Pancreas (tissue), 10 donors: ENCODE measurements at regions of chr1 and their contacts with region 1.

Region 1: GRCh38 chr1:223707256-223708000 is 4.9 kb upstream of the CAPN2 start:
- DNase-seq: peak in 4 of 6 donors; percentile 55 to 74 (median 66)
- ATAC-seq: peak; percentile 80 to 90 (median 85)
- H3K4me3 ChIP-seq: no peak overlapping the region
- H3K27ac ChIP-seq: peak overlapping the region; percentile 33 to 84 (median 76)
- H3K4me1 ChIP-seq: peaks cover 0 to 24% (median 7%) of the 10 kb centered on the region in 3 donors
- H3K27me3 ChIP-seq: no peaks in the 10 kb centered on the region
- CTCF ChIP-seq: no peak

Region 2: DNA sequence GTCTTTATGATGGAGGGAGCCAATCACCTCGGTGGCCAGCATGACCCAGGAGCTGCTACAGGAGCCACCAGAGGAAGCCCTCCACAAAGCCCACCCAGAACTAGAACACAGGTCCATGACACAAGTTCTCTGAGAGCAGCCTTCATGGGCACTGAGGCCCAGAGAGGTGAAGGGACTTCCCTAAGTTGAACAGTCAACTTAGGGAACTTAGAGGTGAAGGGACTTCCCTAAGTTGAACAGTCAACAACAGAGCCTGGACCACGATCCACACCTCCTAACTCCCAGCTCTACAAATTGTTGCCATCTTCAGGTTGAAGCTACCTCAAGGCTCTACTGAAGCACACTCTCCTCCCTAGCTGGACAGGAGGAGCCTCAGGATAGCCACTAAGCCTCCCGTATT is 181.5 kb before region 1 on chr1:
- intact Hi-C with region 1: no loop called
- DNase-seq: no peak
- ATAC-seq: no peak
- H3K4me3 ChIP-seq: no peak overlapping the region
- H3K27ac ChIP-seq: no peak overlapping the region
- H3K4me1 ChIP-seq: no peaks in the 10 kb centered on the region
- H3K27me3 ChIP-seq: no peaks in the 10 kb centered on the region
- CTCF ChIP-seq: no peak

Region 3: GRCh38 chr1:223748773-223749733 is 41.6 kb after region 1 on chr1:
- intact Hi-C with region 1: loop called in 1 of 3 experiments (anchors 2 kb)
- DNase-seq: peak in 5 of 6 donors; percentile 29 to 87 (median 54)
- ATAC-seq: peak; percentile 77 to 92 (median 90)
- H3K4me3 ChIP-seq: peak overlapping the region; percentile 2 to 33 (median 13)
- H3K27ac ChIP-seq: peak overlapping the region in 2 of 4 donors; percentile 28 to 55
- H3K4me1 ChIP-seq: peaks cover 0 to 7% (median 0%) of the 10 kb centered on the region in 3 donors
- H3K27me3 ChIP-seq: no peaks in the 10 kb centered on the region
- CTCF ChIP-seq: peak; percentile 76 to 93 (median 82)

Region 4: GRCh38 chr1:224042557-224043118 is 335.2 kb after region 1 on chr1:
- intact Hi-C with region 1: loop called in 1 of 3 experiments (anchors 10 kb)
- DNase-seq: no peak
- ATAC-seq: no peak
- H3K4me3 ChIP-seq: no peak overlapping the region
- H3K27ac ChIP-seq: no peak overlapping the region
- H3K4me1 ChIP-seq: no peaks in the 10 kb centered on the region
- H3K27me3 ChIP-seq: no peaks in the 10 kb centered on the region
- CTCF ChIP-seq: no peak